CD4-positive, alpha-beta memory T cell (primary cell): ENCODE measurements at regions of chr17 and their contacts with region 1.

Region 1: DNA sequence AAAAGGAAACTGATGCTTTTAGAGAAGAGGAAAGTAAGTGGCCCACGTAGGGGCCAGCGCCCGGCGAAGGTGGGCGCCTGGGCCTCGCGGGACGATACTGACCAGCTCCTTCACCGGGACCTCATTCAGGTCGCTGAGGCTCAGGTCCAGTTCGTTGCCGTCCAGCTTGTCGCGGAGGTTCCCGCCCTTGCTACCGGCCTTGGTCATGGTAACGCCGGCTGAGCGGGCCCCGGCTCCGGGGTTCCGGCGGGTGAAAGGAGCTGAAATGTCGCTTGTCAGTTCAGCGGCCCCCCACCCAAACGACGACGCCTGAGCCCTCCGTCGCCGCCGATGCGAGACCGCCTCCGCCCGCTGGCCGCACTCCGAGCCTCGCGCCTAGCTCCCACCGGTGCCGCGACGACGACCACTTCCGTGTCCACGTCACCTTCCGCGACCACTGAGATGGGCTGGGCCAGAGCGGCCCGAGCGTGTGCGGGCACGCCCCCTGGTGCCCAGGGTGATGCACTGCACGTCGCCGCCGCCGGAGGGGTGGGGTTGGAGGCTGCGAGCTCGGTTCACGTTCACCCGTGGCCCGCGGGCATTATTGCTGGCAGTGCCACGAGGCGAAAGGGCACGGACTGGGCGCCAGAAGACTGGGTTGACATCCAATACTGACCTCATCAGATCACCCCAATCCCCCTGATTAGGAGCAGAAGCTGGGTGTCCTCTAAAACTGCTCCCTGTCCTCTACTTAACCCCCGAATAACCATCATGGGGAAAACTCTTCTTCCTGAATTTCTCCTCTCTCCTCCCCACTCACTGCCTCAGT is at the start of gene LRRC59:
- DNase-seq: peak; percentile 88 to 96 (median 92)
- H3K4me3 ChIP-seq: peak within 1 kb of the TSS; percentile 75 to 82
- H3K4me3 Mint-ChIP-seq: peak within 1 kb of the TSS; percentile 87 to 97 (median 92)
- H3K27ac ChIP-seq: peak within 1 kb of the TSS; percentile 85
- H3K27ac Mint-ChIP-seq: peak within 1 kb of the TSS; percentile 84 to 99 (median 95)
- H3K4me1 ChIP-seq: peaks cover 30% of the 10 kb centered on the region
- H3K4me1 Mint-ChIP-seq: peaks cover 23 to 47% (median 30%) of the 10 kb centered on the region in 4 donors
- H3K27me3 ChIP-seq: no peaks in the 10 kb centered on the region
- H3K27me3 Mint-ChIP-seq: no peaks in the 10 kb centered on the region
- total RNA-seq, gene LRRC59: 30.3 to 30.7 TPM

Region 2: DNA sequence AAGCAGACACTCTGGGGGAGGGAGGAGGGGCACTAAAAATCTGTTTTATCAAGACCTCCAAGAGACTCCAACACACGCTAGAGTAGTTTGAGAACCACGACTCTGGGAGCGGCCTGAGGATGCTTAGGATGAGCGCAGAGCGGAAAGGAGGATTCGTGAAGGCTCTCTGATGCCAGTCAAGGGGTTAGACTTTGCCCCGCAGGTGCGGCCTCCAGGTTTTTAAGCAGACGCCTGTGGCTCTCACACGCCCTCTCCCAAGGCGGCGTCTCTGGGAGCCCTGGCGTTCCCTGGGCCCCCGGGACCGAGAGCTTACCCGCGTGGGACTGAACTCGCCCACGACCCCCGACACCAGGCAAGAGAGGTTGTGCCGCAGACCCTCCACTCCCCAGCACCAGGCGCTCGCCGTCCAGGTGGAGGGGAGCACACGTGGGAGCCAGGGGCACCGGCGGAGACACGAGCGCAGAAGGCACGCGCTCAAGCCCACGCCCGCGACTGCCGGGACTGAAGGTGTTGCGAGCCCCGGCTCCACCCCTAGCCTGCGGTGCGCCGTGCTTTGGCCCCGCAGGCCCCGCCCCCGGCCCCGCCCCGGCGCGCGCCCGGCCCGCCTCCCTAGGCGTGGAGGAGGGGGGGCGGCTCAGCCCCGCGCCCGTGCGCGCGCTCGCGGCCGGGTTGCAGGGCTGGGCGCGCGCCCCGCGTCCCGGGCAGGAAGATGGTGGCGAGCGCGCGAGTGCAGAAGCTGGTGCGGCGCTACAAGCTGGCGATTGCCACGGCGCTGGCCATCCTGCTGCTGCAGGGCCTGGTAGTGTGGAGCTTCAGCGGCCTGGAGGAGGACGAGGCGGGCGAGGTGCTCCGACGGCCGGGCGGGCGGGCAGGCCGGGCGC is 51.6 kb before region 1 on chr17 and contains the start of gene XYLT2:
- CTCF ChIA-PET with region 1: interaction called, 7 read pairs
- POLR2A ChIA-PET with region 1: interaction called, 19 read pairs
- intact Hi-C with region 1: no loop called
- DNase-seq: peak; percentile 86 to 94 (median 93)
- H3K4me3 ChIP-seq: peak within 1 kb of the TSS; percentile 65 to 80
- H3K4me3 Mint-ChIP-seq: peak within 1 kb of the TSS; percentile 88 to 94 (median 91)
- H3K27ac ChIP-seq: peak within 1 kb of the TSS; percentile 72
- H3K27ac Mint-ChIP-seq: peak within 1 kb of the TSS; percentile 88 to 96 (median 92)
- H3K4me1 ChIP-seq: peaks cover 31% of the 10 kb centered on the region
- H3K4me1 Mint-ChIP-seq: peaks cover 15 to 55% (median 33%) of the 10 kb centered on the region in 4 donors
- H3K27me3 ChIP-seq: no peaks in the 10 kb centered on the region
- H3K27me3 Mint-ChIP-seq: no peaks in the 10 kb centered on the region
- total RNA-seq, gene XYLT2: 37.6 to 41.1 TPM

Region 3: DNA sequence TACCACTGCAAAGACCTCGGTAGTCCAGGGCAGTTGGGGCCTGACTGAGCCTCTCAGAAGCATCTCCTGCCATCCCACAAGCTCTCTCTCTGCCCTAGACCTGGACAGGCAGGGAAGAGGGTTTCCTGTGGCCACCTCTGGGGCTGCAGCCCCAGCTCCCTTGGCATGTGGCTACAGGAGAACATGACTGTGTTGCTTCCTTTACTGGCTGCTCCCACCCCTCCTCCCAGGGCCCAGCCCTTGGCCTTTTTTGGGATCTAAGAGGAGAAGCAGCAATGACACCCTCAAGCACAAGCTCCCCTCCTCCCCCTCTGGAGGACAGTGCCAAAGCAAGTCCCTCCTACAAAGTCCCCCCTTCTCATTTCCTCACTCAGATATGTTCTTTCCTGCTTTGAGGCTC is 29.9 kb before region 1 on chr17:
- CTCF ChIA-PET with region 1: interaction called, 77 read pairs
- POLR2A ChIA-PET with region 1: interaction called, 44 read pairs
- intact Hi-C with region 1: loop called (anchors 1 kb)
- DNase-seq: no peak
- H3K4me3 ChIP-seq: no peak overlapping the region
- H3K4me3 Mint-ChIP-seq: no peak overlapping the region
- H3K27ac ChIP-seq: no peak overlapping the region
- H3K27ac Mint-ChIP-seq: no peak overlapping the region
- H3K4me1 ChIP-seq: peaks cover 16% of the 10 kb centered on the region
- H3K4me1 Mint-ChIP-seq: peaks cover 11 to 17% (median 14%) of the 10 kb centered on the region in 4 donors
- H3K27me3 ChIP-seq: no peaks in the 10 kb centered on the region
- H3K27me3 Mint-ChIP-seq: no peaks in the 10 kb centered on the region

Region 4: DNA sequence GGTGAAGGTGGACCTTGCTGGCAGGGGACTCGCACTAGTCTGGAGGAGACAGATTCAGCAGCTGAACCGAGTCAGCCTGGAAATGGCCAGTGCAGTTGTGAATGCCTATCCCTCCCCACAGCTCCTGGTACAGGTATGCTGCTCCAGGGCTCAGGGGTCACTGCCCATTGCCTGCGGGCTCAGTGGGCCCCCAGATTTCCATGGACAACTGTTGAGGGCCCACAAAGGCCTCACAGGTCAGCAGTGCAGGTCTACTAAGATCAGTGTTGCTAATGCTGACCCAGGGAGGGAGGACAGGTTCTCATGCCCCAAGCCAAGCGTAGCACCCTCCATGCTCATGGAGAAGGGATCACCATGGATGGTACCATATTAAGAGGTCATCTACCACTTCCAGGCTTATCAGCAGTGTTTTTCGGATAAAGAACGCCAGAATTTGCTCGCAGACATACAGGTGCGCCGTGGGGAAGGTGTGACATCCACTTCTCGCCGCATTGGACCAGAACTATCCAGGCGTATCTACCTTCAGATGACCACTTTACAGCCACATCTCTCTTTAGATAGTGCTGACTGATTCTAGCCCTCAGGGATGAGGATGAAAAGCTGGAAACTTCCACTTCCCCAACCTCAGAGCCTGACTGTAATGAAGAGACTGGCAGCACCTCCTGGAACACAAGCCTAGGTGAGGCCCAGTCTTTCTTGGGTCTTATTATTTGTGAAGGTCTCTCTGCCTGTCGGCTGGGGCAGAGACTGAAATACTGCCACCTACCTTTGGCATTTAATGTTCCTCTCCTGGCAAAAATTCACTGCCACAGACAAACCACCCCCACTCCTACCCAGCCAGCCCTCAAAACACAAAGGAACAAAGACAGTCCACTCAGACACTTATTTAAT is 16.7 kb before region 1 on chr17:
- CTCF ChIA-PET with region 1: interaction called, 54 read pairs
- POLR2A ChIA-PET with region 1: interaction called, 10 read pairs
- intact Hi-C with region 1: no loop called
- DNase-seq: no peak
- H3K4me3 ChIP-seq: no peak overlapping the region
- H3K4me3 Mint-ChIP-seq: no peak overlapping the region
- H3K27ac ChIP-seq: no peak overlapping the region
- H3K27ac Mint-ChIP-seq: peak overlapping the region in 2 of 7 donors; percentile 48 to 55
- H3K4me1 ChIP-seq: no peaks in the 10 kb centered on the region
- H3K4me1 Mint-ChIP-seq: peaks cover 0 to 1% (median 0%) of the 10 kb centered on the region in 4 donors
- H3K27me3 ChIP-seq: no peaks in the 10 kb centered on the region
- H3K27me3 Mint-ChIP-seq: no peaks in the 10 kb centered on the region

Region 5: DNA sequence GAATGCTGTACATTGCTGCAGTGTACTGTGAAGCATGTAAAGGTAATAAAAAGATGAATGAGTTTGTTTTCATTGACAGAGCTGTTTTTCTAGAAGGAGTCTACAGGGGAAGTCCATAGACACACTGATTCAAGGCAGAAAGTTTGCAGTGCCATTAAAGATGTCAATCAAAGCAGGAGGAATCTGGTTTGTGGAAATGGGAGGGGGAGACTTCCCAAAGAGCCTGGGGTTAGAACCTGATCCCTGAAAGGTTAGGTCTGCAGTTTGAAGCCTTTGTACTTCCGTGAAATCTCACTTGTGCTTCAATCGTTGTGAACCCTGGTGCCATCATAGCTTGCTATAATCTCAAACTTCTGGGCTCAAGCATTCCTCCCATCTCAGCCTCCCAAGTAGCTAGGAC is 33.9 kb after region 1 on chr17:
- CTCF ChIA-PET with region 1: interaction called, 15 read pairs
- POLR2A ChIA-PET with region 1: interaction called, 22 read pairs
- intact Hi-C with region 1: loop called (anchors 1 kb)
- DNase-seq: no peak
- H3K4me3 ChIP-seq: no peak overlapping the region
- H3K4me3 Mint-ChIP-seq: no peak overlapping the region
- H3K27ac ChIP-seq: no peak overlapping the region
- H3K27ac Mint-ChIP-seq: peak overlapping the region in 1 of 7 donors; percentile 31
- H3K4me1 ChIP-seq: peaks cover 16% of the 10 kb centered on the region
- H3K4me1 Mint-ChIP-seq: peaks cover 12 to 20% (median 17%) of the 10 kb centered on the region in 4 donors
- H3K27me3 ChIP-seq: no peaks in the 10 kb centered on the region
- H3K27me3 Mint-ChIP-seq: no peaks in the 10 kb centered on the region